CD4-positive, alpha-beta T cell (primary cell): ENCODE measurements at regions of chr21 and their contacts with region 1.

Region 1: GRCh38 chr21:32392880-32393676 is at the start of gene URB1:
- DNase-seq: peak; percentile 90 to 98 (median 95)
- ATAC-seq: peak; percentile 97
- H3K4me3 ChIP-seq: peak within 1 kb of the TSS; percentile 98
- H3K4me3 Mint-ChIP-seq: peak within 1 kb of the TSS; percentile 94
- H3K27ac ChIP-seq: peak within 1 kb of the TSS; percentile 60 to 64
- H3K27ac Mint-ChIP-seq: peak within 1 kb of the TSS; percentile 80
- H3K4me1 ChIP-seq: peaks cover 26% of the 10 kb centered on the region
- H3K4me1 Mint-ChIP-seq: peaks cover 52% of the 10 kb centered on the region
- H3K27me3 ChIP-seq: no peaks in the 10 kb centered on the region
- H3K27me3 Mint-ChIP-seq: peaks cover under 1% of the 10 kb centered on the region
- CTCF ChIP-seq: no peak
- total RNA-seq, gene URB1: 5.4 to 5.7 TPM

Region 2: GRCh38 chr21:32278518-32279376 is 114.3 kb before region 1 on chr21 and contains the start of gene MIS18A:
- CTCF ChIA-PET with region 1: no interaction called
- POLR2A ChIA-PET with region 1: no interaction called
- intact Hi-C with region 1: loop called in 1 of 2 experiments (anchors 2 kb)
- DNase-seq: peak; percentile 92 to 99 (median 97)
- ATAC-seq: peak; percentile 94
- H3K4me3 ChIP-seq: peak within 1 kb of the TSS; percentile 94
- H3K4me3 Mint-ChIP-seq: peak within 1 kb of the TSS; percentile 99
- H3K27ac ChIP-seq: peak within 1 kb of the TSS in 1 of 2 donors; percentile 26
- H3K27ac Mint-ChIP-seq: peak within 1 kb of the TSS; percentile 94
- H3K4me1 ChIP-seq: peaks cover 20% of the 10 kb centered on the region
- H3K4me1 Mint-ChIP-seq: peaks cover 29% of the 10 kb centered on the region
- H3K27me3 ChIP-seq: no peaks in the 10 kb centered on the region
- H3K27me3 Mint-ChIP-seq: no peaks in the 10 kb centered on the region
- CTCF ChIP-seq: no peak
- total RNA-seq, gene MIS18A: 2.7 to 3.0 TPM

Region 3: GRCh38 chr21:32612075-32612998 is 219.3 kb after region 1 on chr21 and contains the start of gene CFAP298:
- CTCF ChIA-PET with region 1: no interaction called
- POLR2A ChIA-PET with region 1: interaction called, 6 read pairs
- intact Hi-C with region 1: loop called in 1 of 2 experiments (anchors 2 kb)
- DNase-seq: peak; percentile 76 to 98 (median 86)
- ATAC-seq: peak; percentile 93
- H3K4me3 ChIP-seq: peak within 1 kb of the TSS; percentile 83
- H3K4me3 Mint-ChIP-seq: peak within 1 kb of the TSS; percentile 99
- H3K27ac ChIP-seq: peak within 1 kb of the TSS; percentile 76 to 96
- H3K27ac Mint-ChIP-seq: peak within 1 kb of the TSS; percentile 87
- H3K4me1 ChIP-seq: peaks cover 26% of the 10 kb centered on the region
- H3K4me1 Mint-ChIP-seq: peaks cover 27% of the 10 kb centered on the region
- H3K27me3 ChIP-seq: no peaks in the 10 kb centered on the region
- H3K27me3 Mint-ChIP-seq: no peaks in the 10 kb centered on the region
- CTCF ChIP-seq: no peak
- total RNA-seq, gene CFAP298: 7.6 to 9.4 TPM

Region 4: GRCh38 chr21:32770871-32771523 is 377.9 kb after region 1 on chr21:
- CTCF ChIA-PET with region 1: interaction called, 3 read pairs
- POLR2A ChIA-PET with region 1: no interaction called
- intact Hi-C with region 1: loop called in 1 of 2 experiments (anchors 5 kb)
- DNase-seq: peak in 9 of 14 experiments; percentile 1 to 56 (median 33)
- ATAC-seq: peak; percentile 15
- H3K4me3 ChIP-seq: peak overlapping the region; percentile 84
- H3K4me3 Mint-ChIP-seq: peak overlapping the region; percentile 97
- H3K27ac ChIP-seq: peak overlapping the region in 1 of 2 donors; percentile 82
- H3K27ac Mint-ChIP-seq: peak overlapping the region; percentile 93
- H3K4me1 ChIP-seq: peaks cover 30% of the 10 kb centered on the region
- H3K4me1 Mint-ChIP-seq: peaks cover 68% of the 10 kb centered on the region
- H3K27me3 ChIP-seq: no peaks in the 10 kb centered on the region
- H3K27me3 Mint-ChIP-seq: peaks cover 8% of the 10 kb centered on the region
- CTCF ChIP-seq: no peak

Region 5: DNA sequence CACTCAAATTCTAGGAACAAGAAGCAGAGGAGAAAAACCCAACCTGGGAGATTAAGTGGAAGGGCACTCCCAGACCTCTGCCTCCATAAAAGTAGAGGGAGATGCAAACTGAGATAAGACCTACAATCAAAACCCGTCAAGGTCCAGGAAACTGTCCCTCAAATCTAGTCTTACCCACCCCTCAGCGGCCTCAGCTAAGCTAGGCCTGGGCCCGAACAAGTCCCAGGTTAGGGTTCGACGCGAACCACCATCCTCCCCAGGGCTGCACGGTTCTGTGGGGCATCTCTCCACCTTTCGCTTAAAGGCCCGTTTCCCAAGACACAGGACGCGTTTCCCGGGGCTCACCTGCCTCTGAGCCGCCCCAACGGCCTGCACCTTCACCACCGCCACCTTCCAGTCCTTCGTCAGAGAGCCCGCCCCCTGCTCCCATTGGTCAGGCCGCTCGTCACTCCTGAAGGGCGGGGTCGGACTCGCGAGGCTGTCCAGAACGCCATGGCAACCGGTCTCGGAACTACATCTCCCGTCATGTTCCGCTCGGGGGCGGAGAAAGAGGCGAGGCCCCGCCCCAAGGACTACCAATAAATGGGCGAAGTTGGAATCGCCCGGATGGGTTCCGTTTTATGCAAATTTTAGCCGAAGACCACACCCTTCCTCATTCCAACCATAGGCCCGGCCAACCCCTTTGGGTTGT is 1248.4 kb after region 1 on chr21 and contains the start of gene CRYZL1:
- CTCF ChIA-PET with region 1: no interaction called
- POLR2A ChIA-PET with region 1: no interaction called
- intact Hi-C with region 1: loop called in 1 of 2 experiments (anchors 5 kb)
- DNase-seq: peak; percentile 99 to 100 (median 100)
- ATAC-seq: peak; percentile 75
- H3K4me3 ChIP-seq: peak within 1 kb of the TSS; percentile 67
- H3K4me3 Mint-ChIP-seq: peak within 1 kb of the TSS; percentile 95
- H3K27ac ChIP-seq: peak within 1 kb of the TSS; percentile 75 to 81
- H3K27ac Mint-ChIP-seq: peak within 1 kb of the TSS; percentile 85
- H3K4me1 ChIP-seq: peaks cover 18% of the 10 kb centered on the region
- H3K4me1 Mint-ChIP-seq: peaks cover 40% of the 10 kb centered on the region
- H3K27me3 ChIP-seq: peaks cover 5 to 17% of the 10 kb centered on the region in 2 experiments
- H3K27me3 Mint-ChIP-seq: peaks cover 13% of the 10 kb centered on the region
- CTCF ChIP-seq: no peak
- total RNA-seq, gene CRYZL1: 28.6 to 30.5 TPM